ENCODE measurements at regions of chr15 and their contacts with region 1.

Region 1: DNA sequence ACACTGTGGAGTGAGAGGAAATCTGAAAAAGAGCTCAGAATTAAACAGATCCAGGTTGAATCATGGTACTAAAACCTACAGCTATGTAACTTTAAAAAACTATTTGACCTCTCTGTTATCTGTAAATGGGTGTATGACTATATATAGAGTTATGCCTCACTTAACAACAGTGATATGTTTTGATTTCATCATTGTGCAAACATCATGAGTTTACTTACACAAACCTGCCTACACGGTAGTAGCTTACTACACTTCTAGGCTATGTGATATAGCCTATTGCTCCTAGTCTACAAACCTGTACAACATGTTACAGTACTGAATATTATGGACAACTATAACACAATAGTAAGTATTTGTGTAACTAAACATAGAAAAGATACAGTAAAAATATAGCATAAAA is 191.6 kb upstream of the MEIS2 start:
- DNase-seq: no peak
- ATAC-seq: no peak
- H3K4me3 ChIP-seq: no peak overlapping the region
- H3K4me3 Mint-ChIP-seq: no peak overlapping the region
- H3K27ac ChIP-seq: no peak overlapping the region
- H3K27ac Mint-ChIP-seq: no peak overlapping the region
- H3K4me1 ChIP-seq: no peaks in the 10 kb centered on the region
- H3K4me1 Mint-ChIP-seq: no peaks in the 10 kb centered on the region
- H3K27me3 ChIP-seq: no peaks in the 10 kb centered on the region
- H3K27me3 Mint-ChIP-seq: no peaks in the 10 kb centered on the region
- CTCF ChIP-seq: no peak

Region 2: DNA sequence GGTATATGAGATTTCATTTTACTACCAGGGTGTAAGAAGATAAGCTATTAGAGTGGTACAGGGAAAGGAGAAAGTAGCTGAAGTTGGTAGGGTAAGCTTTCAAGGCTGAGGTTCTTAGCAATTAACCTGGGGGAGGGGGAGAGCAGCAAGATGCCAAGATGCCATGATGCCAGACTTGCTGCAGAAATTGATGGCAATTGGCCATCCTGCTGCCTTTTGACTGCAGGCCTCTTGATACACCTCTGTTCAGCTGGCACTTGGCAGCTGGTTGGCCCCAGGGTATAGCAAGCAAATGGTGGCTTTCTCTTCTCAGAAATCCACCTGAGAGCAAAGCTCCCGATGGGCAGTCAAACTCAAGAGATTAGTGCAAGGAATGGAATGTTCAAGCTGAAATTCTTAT is 1724.5 kb before region 1 on chr15:
- CTCF ChIA-PET with region 1: no interaction called
- POLR2A ChIA-PET with region 1: no interaction called
- intact Hi-C with region 1: no loop called
- DNase-seq: no peak
- ATAC-seq: no peak
- H3K4me3 ChIP-seq: no peak overlapping the region
- H3K4me3 Mint-ChIP-seq: no peak overlapping the region
- H3K27ac ChIP-seq: no peak overlapping the region
- H3K27ac Mint-ChIP-seq: no peak overlapping the region
- H3K4me1 ChIP-seq: no peaks in the 10 kb centered on the region
- H3K4me1 Mint-ChIP-seq: no peaks in the 10 kb centered on the region
- H3K27me3 ChIP-seq: no peaks in the 10 kb centered on the region
- H3K27me3 Mint-ChIP-seq: peaks cover 4% of the 10 kb centered on the region
- CTCF ChIP-seq: no peak

Region 3: GRCh38 chr15:36558921-36559320 is 733.0 kb before region 1 on chr15:
- CTCF ChIA-PET with region 1: no interaction called
- POLR2A ChIA-PET with region 1: no interaction called
- intact Hi-C with region 1: no loop called
- DNase-seq: no peak
- ATAC-seq: no peak
- H3K4me3 ChIP-seq: no peak overlapping the region
- H3K4me3 Mint-ChIP-seq: no peak overlapping the region
- H3K27ac ChIP-seq: no peak overlapping the region
- H3K27ac Mint-ChIP-seq: no peak overlapping the region
- H3K4me1 ChIP-seq: no peaks in the 10 kb centered on the region
- H3K4me1 Mint-ChIP-seq: no peaks in the 10 kb centered on the region
- H3K27me3 ChIP-seq: no peaks in the 10 kb centered on the region
- H3K27me3 Mint-ChIP-seq: peaks cover 11% of the 10 kb centered on the region
- CTCF ChIP-seq: no peak

Region 4: GRCh38 chr15:37359101-37359892 is 67.4 kb after region 1 on chr15:
- CTCF ChIA-PET with region 1: no interaction called
- POLR2A ChIA-PET with region 1: no interaction called
- intact Hi-C with region 1: loop called in 1 of 2 experiments (anchors 10 kb)
- DNase-seq: no peak
- ATAC-seq: no peak
- H3K4me3 ChIP-seq: no peak overlapping the region
- H3K4me3 Mint-ChIP-seq: no peak overlapping the region
- H3K27ac ChIP-seq: no peak overlapping the region
- H3K27ac Mint-ChIP-seq: no peak overlapping the region
- H3K4me1 ChIP-seq: no peaks in the 10 kb centered on the region
- H3K4me1 Mint-ChIP-seq: no peaks in the 10 kb centered on the region
- H3K27me3 ChIP-seq: no peaks in the 10 kb centered on the region
- H3K27me3 Mint-ChIP-seq: no peaks in the 10 kb centered on the region
- CTCF ChIP-seq: no peak

Region 5: DNA sequence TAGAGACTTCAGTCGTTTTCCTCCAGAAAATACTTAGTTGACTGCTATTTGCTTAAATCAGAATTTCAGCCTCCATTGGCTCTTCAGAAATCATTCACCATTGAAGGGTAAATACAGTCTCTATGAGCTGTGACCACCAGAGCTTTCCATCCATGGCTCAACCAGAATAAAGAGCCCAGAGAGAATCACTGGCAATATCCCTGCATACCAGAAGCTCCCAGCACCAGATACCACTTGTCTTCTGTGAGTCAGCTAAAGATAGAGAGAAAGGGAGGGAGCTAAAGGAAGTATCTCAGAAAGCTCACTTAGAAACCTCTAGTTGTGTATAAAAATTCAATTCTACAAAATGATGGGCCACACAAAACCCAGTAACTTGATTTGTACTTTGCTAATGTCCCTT is 527.3 kb after region 1 on chr15:
- CTCF ChIA-PET with region 1: no interaction called
- POLR2A ChIA-PET with region 1: no interaction called
- intact Hi-C with region 1: no loop called
- DNase-seq: no peak
- ATAC-seq: no peak
- H3K4me3 ChIP-seq: no peak overlapping the region
- H3K4me3 Mint-ChIP-seq: no peak overlapping the region
- H3K27ac ChIP-seq: no peak overlapping the region
- H3K27ac Mint-ChIP-seq: no peak overlapping the region
- H3K4me1 ChIP-seq: no peaks in the 10 kb centered on the region
- H3K4me1 Mint-ChIP-seq: no peaks in the 10 kb centered on the region
- H3K27me3 ChIP-seq: no peaks in the 10 kb centered on the region
- H3K27me3 Mint-ChIP-seq: no peaks in the 10 kb centered on the region
- CTCF ChIP-seq: no peak